Right cardiac atrium (tissue), 5 donors: ENCODE measurements at regions of chr21 and their contacts with region 1.

Region 1: GRCh38 chr21:39125752-39126485 is 57.3 kb downstream of the PSMG1 start:
- DNase-seq: no peak
- ATAC-seq: peak; percentile 94
- H3K4me3 ChIP-seq: no peak overlapping the region
- H3K27ac ChIP-seq: no peak overlapping the region
- H3K4me1 ChIP-seq: no peaks in the 10 kb centered on the region
- H3K27me3 ChIP-seq: no peaks in the 10 kb centered on the region

Region 2: GRCh38 chr21:39022863-39023693 is 102.8 kb before region 1 on chr21:
- intact Hi-C with region 1: loop called in 1 of 4 experiments (anchors 10 kb)
- DNase-seq: peak; percentile 77 to 91 (median 90)
- ATAC-seq: peak; percentile 82 to 88
- H3K4me3 ChIP-seq: no peak overlapping the region
- H3K27ac ChIP-seq: peak overlapping the region; percentile 22
- H3K4me1 ChIP-seq: peaks cover 7% of the 10 kb centered on the region
- H3K27me3 ChIP-seq: no peaks in the 10 kb centered on the region

Region 3: DNA sequence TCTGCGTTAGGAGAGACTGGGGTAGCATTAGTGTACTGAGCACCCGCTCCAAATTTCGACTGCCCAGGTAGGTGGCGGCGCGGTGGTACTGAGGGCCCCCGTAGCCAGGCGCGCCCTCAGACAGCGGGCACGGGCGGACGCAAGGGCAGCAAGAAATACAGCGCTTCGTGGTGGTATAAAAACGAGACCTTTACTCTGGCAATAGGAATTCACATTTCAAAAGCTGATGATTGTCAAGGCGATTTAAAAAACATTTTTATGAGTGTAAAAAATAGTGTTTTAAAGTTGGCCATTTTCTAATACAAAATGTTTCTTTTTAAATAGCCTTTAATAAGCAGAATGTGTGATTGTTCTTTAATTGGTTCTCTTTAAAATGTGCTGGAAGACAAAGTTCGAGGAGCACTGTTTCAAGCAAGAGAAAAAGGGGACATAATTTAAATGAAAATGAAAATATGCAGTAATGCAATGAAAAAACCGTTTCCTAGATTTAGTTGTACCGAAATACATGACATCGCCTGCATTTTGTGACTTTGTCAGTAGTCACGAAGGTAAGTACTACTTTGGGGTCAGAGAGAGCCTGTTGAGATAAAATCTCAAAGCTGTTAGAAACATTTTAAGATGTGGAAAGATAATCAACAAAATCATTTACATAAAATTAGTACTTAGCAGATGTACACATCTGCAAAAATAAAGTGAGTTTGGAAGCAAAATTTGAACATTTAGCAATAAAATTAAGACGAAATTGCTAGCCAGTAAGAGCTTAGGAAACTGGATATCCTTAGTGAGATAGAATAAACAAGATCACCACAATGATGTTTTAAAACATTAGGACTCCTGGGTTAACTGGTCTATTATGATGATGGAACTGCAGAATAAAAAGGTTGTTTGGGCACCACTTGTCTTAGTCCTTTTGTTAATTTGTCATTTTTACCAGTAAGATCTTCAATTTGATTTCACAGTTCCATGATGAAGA is 58.4 kb after region 1 on chr21:
- intact Hi-C with region 1: no loop called
- DNase-seq: no peak
- ATAC-seq: no peak
- H3K4me3 ChIP-seq: peak overlapping the region; percentile 63
- H3K27ac ChIP-seq: peak overlapping the region; percentile 81
- H3K4me1 ChIP-seq: no peaks in the 10 kb centered on the region
- H3K27me3 ChIP-seq: no peaks in the 10 kb centered on the region

Region 4: GRCh38 chr21:39313571-39314142 is 187.7 kb after region 1 on chr21 and contains the start of gene BRWD1:
- intact Hi-C with region 1: no loop called
- DNase-seq: peak; percentile 86 to 95 (median 94)
- ATAC-seq: peak; percentile 83 to 84
- H3K4me3 ChIP-seq: peak within 1 kb of the TSS; percentile 97
- H3K27ac ChIP-seq: peak within 1 kb of the TSS; percentile 93
- H3K4me1 ChIP-seq: peaks cover 4% of the 10 kb centered on the region
- H3K27me3 ChIP-seq: no peaks in the 10 kb centered on the region
- total RNA-seq, gene BRWD1: 31.0 to 36.9 (median 32.7) TPM